Heart left ventricle (tissue), 16 donors: ENCODE measurements at regions of chr6 and their contacts with region 1.

Region 1: DNA sequence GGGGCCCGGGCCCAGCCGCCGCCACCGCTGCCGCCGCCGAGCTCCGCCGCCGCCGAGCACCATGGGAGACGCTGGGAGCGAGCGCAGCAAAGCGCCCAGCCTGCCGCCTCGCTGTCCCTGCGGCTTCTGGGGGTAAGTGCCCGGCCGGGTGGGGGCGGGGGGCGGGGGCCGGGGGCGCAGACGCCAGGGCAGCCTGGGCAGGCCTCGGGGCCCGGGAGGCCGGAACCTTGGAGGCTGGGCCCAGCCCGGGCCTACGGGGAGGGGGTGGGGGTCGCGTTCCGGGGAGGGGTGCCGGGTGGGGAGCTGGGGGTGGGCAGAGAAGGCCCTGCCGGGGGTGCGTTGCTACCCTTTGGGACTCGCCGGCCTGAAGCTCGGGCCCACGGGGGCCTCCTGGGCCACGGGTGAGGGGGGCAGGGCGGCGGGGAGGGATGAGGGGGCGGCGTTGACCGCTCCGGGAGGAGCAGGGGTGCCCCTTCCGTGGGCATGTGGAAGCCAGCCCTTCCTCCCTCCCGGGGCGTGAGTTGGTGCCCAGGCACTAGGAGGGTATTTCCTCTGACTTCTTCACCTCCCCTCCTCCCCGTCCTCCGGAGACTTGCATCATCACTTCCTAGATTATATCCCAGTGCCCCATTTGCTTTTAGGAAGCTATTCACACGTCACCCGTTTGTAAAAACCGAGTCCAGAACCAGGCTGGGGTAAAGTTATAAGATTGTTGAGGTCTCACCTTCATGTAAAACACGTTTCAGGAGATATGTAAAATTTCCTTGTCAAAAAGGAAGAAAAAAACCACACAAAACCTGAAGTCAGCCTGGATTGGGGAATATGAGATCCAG is 574 bp downstream of the ZFAND3 start:
- DNase-seq: peak; percentile 60 to 77 (median 70)
- ATAC-seq: peak in 3 of 4 donors; percentile 14 to 23 (median 22)
- H3K4me3 ChIP-seq: peak overlapping the region; percentile 59 to 96 (median 86)
- H3K27ac ChIP-seq: peak overlapping the region; percentile 84 to 100 (median 98)
- H3K4me1 ChIP-seq: peaks cover 7 to 58% (median 44%) of the 10 kb centered on the region in 12 donors
- H3K27me3 ChIP-seq: no peaks in the 10 kb centered on the region
- CTCF ChIP-seq: no peak
- POLR2A ChIP-seq: no peak

Region 2: GRCh38 chr6:37860226-37860839 is 40.2 kb after region 1 on chr6:
- intact Hi-C with region 1: loop called in 1 of 10 experiments (anchors 5 kb)
- DNase-seq: peak in 2 of 5 donors; percentile 16 to 31
- ATAC-seq: no peak
- H3K4me3 ChIP-seq: no peak overlapping the region
- H3K27ac ChIP-seq: no peak overlapping the region
- H3K4me1 ChIP-seq: peaks cover 0 to 28% (median 7%) of the 10 kb centered on the region in 12 donors
- H3K27me3 ChIP-seq: no peaks in the 10 kb centered on the region
- CTCF ChIP-seq: peak in 11 of 12 donors; percentile 43 to 77 (median 59)
- POLR2A ChIP-seq: no peak

Region 3: DNA sequence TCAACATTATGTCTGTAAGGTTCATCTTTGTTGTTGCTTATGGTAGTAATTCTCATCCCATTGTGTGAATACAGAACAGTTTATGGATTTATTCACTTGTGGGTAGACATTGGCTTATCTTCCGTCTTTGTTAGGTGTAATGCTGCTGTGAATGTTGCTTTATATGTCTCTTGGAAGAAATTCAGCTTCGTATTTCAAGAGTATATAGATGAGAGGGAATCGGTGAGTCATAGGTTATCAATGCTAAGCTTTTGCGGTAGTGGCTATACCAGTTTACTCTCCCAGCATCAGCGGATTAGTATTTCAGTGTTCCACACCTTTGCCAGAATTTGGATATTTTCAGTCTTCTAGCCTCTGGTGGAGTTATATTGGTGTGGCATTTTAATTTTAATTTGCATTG is 77.2 kb after region 1 on chr6:
- intact Hi-C with region 1: loop called in 1 of 10 experiments (anchors 5 kb)
- DNase-seq: no peak
- ATAC-seq: no peak
- H3K4me3 ChIP-seq: no peak overlapping the region
- H3K27ac ChIP-seq: no peak overlapping the region
- H3K4me1 ChIP-seq: peaks cover 0 to 11% (median 0%) of the 10 kb centered on the region in 12 donors
- H3K27me3 ChIP-seq: no peaks in the 10 kb centered on the region
- CTCF ChIP-seq: no peak
- POLR2A ChIP-seq: no peak

Region 4: DNA sequence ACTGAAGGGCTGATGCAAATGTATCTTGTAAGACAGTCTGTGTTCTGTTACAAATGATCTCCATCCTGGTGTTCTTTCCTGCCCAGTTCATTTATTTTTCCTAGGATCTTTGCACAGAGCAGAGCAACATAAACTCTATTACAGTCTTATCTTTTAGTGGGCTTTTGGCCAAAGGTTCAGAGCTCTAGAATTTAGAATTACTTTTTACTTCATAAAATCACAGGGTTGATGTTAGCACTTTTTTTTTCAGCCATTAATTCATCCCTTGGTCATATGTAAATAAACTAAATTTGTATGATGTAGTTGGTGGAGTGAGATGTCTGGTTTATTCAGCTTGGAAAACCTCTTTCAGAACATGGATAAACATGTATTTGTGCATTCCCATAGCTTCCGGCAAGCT is 181.3 kb after region 1 on chr6:
- intact Hi-C with region 1: loop called in 1 of 10 experiments (anchors 10 kb)
- DNase-seq: no peak
- ATAC-seq: no peak
- H3K4me3 ChIP-seq: no peak overlapping the region
- H3K27ac ChIP-seq: no peak overlapping the region
- H3K4me1 ChIP-seq: peaks cover 0 to 22% (median 5%) of the 10 kb centered on the region in 12 donors
- H3K27me3 ChIP-seq: no peaks in the 10 kb centered on the region
- CTCF ChIP-seq: no peak
- POLR2A ChIP-seq: no peak